Endothelial cell of umbilical vein (primary cell): ENCODE measurements at regions of chr1 and their contacts with region 1.

Region 1: GRCh38 chr1:86018283-86018923 is 138.2 kb downstream of the COL24A1 start:
- DNase-seq: peak; percentile 59
- H3K4me3 ChIP-seq: no peak overlapping the region
- H3K27ac ChIP-seq: no peak overlapping the region
- H3K4me1 ChIP-seq: no peaks in the 10 kb centered on the region
- H3K27me3 ChIP-seq: peaks cover 0 to 2% of the 10 kb centered on the region in 2 experiments
- CTCF ChIP-seq: peak; percentile 65 to 70
- POLR2A ChIP-seq: no peak

Region 2: DNA sequence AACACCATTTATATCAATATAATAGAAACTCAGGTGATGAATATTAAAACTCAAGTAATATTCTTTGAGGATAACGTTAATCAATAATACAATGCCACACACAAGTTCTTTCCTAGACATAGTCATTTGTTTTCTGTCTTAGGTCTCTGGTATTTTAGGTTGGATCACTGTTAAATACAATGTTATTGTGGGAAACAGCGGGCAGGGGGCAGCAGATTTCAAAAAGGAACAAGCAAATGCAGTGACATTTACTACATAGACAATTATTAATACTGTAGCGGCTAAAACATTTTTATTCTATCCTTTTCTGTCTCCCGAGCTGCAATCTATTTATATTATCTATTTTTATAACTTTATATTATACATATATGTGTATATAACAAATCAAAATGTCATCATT is 123.8 kb before region 1 on chr1:
- CTCF ChIA-PET with region 1: interaction called, 16 read pairs
- POLR2A ChIA-PET with region 1: no interaction called
- dilution Hi-C with region 1: no loop called
- intact Hi-C with region 1: loop called (anchors 5 kb)
- DNase-seq: peak; percentile 56
- H3K4me3 ChIP-seq: no peak overlapping the region
- H3K27ac ChIP-seq: no peak overlapping the region
- H3K4me1 ChIP-seq: no peaks in the 10 kb centered on the region
- H3K27me3 ChIP-seq: peaks cover 0 to 3% of the 10 kb centered on the region in 2 experiments
- CTCF ChIP-seq: peak in 1 of 2 donors; percentile 42
- POLR2A ChIP-seq: no peak

Region 3: GRCh38 chr1:85992791-85993190 is 25.6 kb before region 1 on chr1:
- CTCF ChIA-PET with region 1: interaction called, 13 read pairs
- POLR2A ChIA-PET with region 1: no interaction called
- dilution Hi-C with region 1: no loop called
- intact Hi-C with region 1: no loop called
- DNase-seq: peak; percentile 49
- H3K4me3 ChIP-seq: no peak overlapping the region
- H3K27ac ChIP-seq: no peak overlapping the region
- H3K4me1 ChIP-seq: no peaks in the 10 kb centered on the region
- H3K27me3 ChIP-seq: no peaks in the 10 kb centered on the region
- CTCF ChIP-seq: no peak
- POLR2A ChIP-seq: no peak

Region 4: GRCh38 chr1:86000601-86001000 is 17.8 kb before region 1 on chr1:
- CTCF ChIA-PET with region 1: interaction called, 13 read pairs
- POLR2A ChIA-PET with region 1: no interaction called
- dilution Hi-C with region 1: no loop called
- intact Hi-C with region 1: no loop called
- DNase-seq: no peak
- H3K4me3 ChIP-seq: no peak overlapping the region
- H3K27ac ChIP-seq: no peak overlapping the region
- H3K4me1 ChIP-seq: no peaks in the 10 kb centered on the region
- H3K27me3 ChIP-seq: peaks cover 7 to 10% of the 10 kb centered on the region in 2 experiments
- CTCF ChIP-seq: no peak
- POLR2A ChIP-seq: no peak

Region 5: GRCh38 chr1:86035101-86035500 is 16.7 kb after region 1 on chr1:
- CTCF ChIA-PET with region 1: interaction called, 46 read pairs
- POLR2A ChIA-PET with region 1: no interaction called
- dilution Hi-C with region 1: no loop called
- intact Hi-C with region 1: no loop called
- DNase-seq: no peak
- H3K4me3 ChIP-seq: no peak overlapping the region
- H3K27ac ChIP-seq: no peak overlapping the region
- H3K4me1 ChIP-seq: no peaks in the 10 kb centered on the region
- H3K27me3 ChIP-seq: peaks cover 0 to 9% of the 10 kb centered on the region in 2 experiments
- CTCF ChIP-seq: no peak
- POLR2A ChIP-seq: no peak

Region 6: DNA sequence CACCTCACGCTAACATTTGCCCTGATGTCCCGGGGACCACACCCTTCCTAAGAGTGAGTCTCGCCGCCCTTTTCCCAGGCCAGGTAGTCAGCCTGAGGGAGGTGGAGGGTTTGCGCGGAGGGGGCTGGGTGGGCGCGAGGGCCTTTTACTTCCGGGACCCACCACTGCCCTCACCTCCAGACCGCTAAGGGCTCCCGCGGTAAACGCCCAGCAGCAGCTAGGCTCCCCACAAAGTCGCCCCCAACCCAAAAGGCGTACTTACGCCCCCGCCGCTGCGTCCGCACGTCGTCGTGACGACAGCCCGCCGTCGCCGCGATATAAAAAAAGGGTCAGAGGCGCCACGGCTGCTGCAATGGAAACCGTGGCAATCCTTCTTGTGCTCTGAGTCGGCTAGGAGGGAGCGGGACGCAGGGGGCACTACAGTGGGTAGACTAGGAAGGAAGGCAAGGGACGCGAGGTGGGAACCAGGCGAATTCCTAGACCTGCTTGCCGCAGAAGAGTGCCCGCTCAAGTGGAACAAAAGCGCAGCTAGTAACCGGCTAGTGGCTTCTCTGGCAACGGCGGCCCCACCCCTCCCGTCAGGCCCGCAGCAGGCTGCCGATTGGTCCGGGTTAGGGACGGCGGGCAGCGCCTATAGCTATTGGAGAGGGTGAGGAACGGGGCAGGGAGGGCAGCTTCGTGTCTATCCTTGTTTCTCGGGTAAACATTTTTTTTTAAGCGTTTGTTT is 377.5 kb after region 1 on chr1 and contains the start of gene ODF2L:
- CTCF ChIA-PET with region 1: no interaction called
- POLR2A ChIA-PET with region 1: no interaction called
- dilution Hi-C with region 1: no loop called
- intact Hi-C with region 1: no loop called
- DNase-seq: peak; percentile 90
- H3K4me3 ChIP-seq: peak within 1 kb of the TSS; percentile 85 to 96 (median 85)
- H3K27ac ChIP-seq: peak within 1 kb of the TSS; percentile 72
- H3K4me1 ChIP-seq: peaks cover 28% of the 10 kb centered on the region
- H3K27me3 ChIP-seq: peaks cover 0 to 2% of the 10 kb centered on the region in 2 experiments
- CTCF ChIP-seq: no peak
- POLR2A ChIP-seq: peak; percentile 57
- total RNA-seq, gene ODF2L: 74.7 and 86.3 TPM in 2 replicates

Region 7: DNA sequence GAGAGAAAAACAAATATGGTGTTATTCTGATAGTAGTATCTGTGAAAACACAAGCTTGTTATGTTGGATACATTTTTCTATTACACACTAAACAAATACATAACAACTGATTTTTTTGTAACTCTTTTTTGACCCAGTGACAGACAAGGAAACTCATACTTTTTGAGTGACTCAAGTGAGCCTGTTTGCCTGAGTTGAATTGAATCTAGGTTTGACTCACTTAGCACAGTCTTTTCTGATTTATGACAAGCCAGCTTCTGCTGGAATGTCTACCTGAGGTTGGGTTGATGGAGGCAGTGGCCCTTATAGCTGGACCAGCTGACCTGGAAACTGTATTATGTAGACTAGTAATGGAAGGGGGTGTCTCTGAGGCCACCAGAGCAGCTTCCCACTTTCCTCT is 524.2 kb after region 1 on chr1:
- CTCF ChIA-PET with region 1: no interaction called
- POLR2A ChIA-PET with region 1: no interaction called
- dilution Hi-C with region 1: no loop called
- intact Hi-C with region 1: no loop called
- DNase-seq: peak; percentile 42
- H3K4me3 ChIP-seq: no peak overlapping the region
- H3K27ac ChIP-seq: no peak overlapping the region
- H3K4me1 ChIP-seq: no peaks in the 10 kb centered on the region
- H3K27me3 ChIP-seq: no peaks in the 10 kb centered on the region
- CTCF ChIP-seq: no peak
- POLR2A ChIP-seq: no peak